ENCODE measurements at regions of chr1 and their contacts with region 1.

Region 1: DNA sequence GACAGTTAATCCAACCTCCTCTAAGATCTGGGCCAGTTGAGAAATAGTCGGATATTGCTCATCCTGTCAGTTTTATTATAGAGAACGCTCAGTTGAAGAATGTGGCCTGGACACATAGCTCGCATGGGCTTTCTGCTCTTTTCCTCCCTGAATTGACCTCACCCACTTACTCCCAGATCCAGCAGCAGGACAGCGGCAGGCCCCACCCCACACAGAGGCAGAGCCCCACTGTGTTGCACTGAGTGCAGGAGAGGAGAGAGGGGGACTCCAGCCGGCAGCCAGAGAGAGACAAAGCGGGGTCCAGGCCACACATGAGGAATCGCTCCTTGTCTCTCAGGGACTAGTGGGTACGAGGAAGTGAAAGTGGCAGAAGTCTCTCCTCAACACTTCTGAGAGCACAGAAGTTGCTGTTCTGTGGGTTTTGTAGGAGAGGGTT is 78.6 kb downstream of the LAMC1 start:
- DNase-seq: peak; percentile 25 to 45
- H3K4me3 ChIP-seq: no peak overlapping the region
- H3K4me3 Mint-ChIP-seq: peak overlapping the region; percentile 7
- H3K27ac Mint-ChIP-seq: no peak overlapping the region
- H3K4me1 ChIP-seq: peaks cover 72% of the 10 kb centered on the region
- H3K4me1 Mint-ChIP-seq: peaks cover 18% of the 10 kb centered on the region
- H3K27me3 ChIP-seq: no peaks in the 10 kb centered on the region
- H3K27me3 Mint-ChIP-seq: no peaks in the 10 kb centered on the region
- CTCF ChIP-seq: no peak

Region 2: DNA sequence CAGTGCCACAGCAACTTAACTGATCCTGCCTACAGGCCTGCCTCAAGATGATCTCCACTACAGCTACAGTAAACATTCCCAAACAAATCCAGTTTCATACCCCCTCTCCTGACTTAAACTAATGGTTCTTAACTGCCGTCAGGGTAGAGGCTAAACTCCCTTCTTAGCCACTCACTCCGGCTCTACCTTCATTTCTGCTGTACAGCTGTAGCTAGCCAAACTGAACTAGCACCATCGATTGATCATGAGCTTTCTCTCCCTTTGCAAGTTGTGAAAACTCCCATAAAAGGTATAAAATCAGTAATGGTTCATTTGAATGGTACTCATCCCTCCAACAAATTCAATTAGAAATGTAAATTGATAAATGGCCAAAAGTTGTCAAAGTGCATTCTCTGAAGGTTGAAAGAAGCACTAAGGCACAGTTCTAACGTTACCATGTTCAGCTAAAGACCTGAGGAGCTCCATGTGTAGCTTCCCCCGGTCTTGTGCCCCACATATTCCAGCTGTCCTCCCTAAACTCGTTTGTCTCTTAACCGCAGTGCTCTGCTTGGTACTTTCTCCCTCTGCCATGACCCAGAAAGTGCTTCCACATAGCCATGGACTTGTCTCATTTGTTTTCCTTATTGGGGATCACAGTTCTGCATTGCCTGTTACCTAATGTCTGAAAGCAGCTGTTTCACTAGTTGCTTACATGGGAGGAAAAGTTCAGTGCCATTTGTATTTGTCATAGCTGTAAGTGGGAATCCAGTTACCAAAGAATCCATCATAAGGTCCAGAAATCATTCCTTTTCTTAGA is 212.9 kb before region 1 on chr1:
- CTCF ChIA-PET with region 1: no interaction called
- POLR2A ChIA-PET with region 1: no interaction called
- intact Hi-C with region 1: no loop called
- DNase-seq: no peak
- H3K4me3 ChIP-seq: no peak overlapping the region
- H3K4me3 Mint-ChIP-seq: no peak overlapping the region
- H3K27ac Mint-ChIP-seq: no peak overlapping the region
- H3K4me1 ChIP-seq: no peaks in the 10 kb centered on the region
- H3K4me1 Mint-ChIP-seq: no peaks in the 10 kb centered on the region
- H3K27me3 ChIP-seq: no peaks in the 10 kb centered on the region
- H3K27me3 Mint-ChIP-seq: no peaks in the 10 kb centered on the region
- CTCF ChIP-seq: no peak

Region 3: GRCh38 chr1:182962554-182963115 is 139.2 kb before region 1 on chr1:
- CTCF ChIA-PET with region 1: no interaction called
- POLR2A ChIA-PET with region 1: no interaction called
- intact Hi-C with region 1: loop called (anchors 1 kb)
- DNase-seq: peak; percentile 78 to 81
- H3K4me3 ChIP-seq: peak overlapping the region; percentile 21; the same call in 1 of the 2 replicates
- H3K4me3 Mint-ChIP-seq: peak overlapping the region; percentile 55
- H3K27ac Mint-ChIP-seq: peak overlapping the region; percentile 58
- H3K4me1 ChIP-seq: peaks cover 36% of the 10 kb centered on the region
- H3K4me1 Mint-ChIP-seq: peaks cover 14% of the 10 kb centered on the region
- H3K27me3 ChIP-seq: no peaks in the 10 kb centered on the region
- H3K27me3 Mint-ChIP-seq: no peaks in the 10 kb centered on the region
- CTCF ChIP-seq: peak; percentile 90 to 93

Region 4: DNA sequence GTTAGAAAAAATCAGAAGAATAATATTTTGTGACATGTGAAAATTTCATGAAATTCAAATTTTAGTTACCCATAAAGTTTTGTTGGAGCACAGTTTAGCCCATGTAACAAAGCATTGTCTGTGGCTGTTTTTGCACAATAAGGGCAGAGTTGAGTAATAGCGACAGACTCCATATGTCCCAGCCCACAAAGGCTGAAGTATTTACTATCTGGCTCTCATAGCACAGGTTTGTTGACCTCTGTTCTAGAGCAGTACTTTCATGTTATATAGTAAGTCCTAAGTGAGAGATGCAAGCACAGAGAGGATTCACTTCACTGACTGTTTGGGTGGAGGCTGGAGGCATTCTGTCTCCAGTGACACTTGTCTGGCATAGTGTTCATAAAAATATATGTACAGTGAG is 71.8 kb before region 1 on chr1:
- CTCF ChIA-PET with region 1: no interaction called
- POLR2A ChIA-PET with region 1: no interaction called
- intact Hi-C with region 1: loop called (anchors 1 kb)
- DNase-seq: peak; percentile 42 to 63
- H3K4me3 ChIP-seq: no peak overlapping the region
- H3K4me3 Mint-ChIP-seq: peak overlapping the region; percentile 32
- H3K27ac Mint-ChIP-seq: peak overlapping the region; percentile 63
- H3K4me1 ChIP-seq: peaks cover 64% of the 10 kb centered on the region
- H3K4me1 Mint-ChIP-seq: peaks cover 43% of the 10 kb centered on the region
- H3K27me3 ChIP-seq: no peaks in the 10 kb centered on the region
- H3K27me3 Mint-ChIP-seq: no peaks in the 10 kb centered on the region
- CTCF ChIP-seq: no peak

Region 5: DNA sequence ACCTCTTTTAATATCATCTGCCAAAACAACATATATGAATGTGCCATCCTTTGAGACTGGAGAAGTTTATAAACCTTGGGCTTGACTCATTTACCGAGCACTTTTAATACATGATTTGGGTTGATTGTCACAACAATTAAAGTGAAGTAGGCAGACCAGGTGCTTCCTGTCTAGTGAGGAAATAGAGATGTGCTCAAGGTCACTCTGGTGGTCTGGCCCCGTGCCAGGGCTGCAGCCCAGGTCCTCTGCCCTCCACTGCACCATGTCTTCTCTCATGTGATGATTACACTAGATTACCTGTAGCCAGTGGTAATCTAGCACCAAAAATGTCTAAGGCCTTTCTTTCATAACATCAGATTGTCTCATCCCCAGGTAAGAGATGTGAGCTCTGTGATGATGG is 22.4 kb after region 1 on chr1:
- CTCF ChIA-PET with region 1: no interaction called
- POLR2A ChIA-PET with region 1: no interaction called
- intact Hi-C with region 1: loop called (anchors 2 kb)
- DNase-seq: no peak
- H3K4me3 ChIP-seq: no peak overlapping the region
- H3K4me3 Mint-ChIP-seq: no peak overlapping the region
- H3K27ac Mint-ChIP-seq: no peak overlapping the region
- H3K4me1 ChIP-seq: peaks cover 20% of the 10 kb centered on the region
- H3K4me1 Mint-ChIP-seq: peaks cover 19% of the 10 kb centered on the region
- H3K27me3 ChIP-seq: no peaks in the 10 kb centered on the region
- H3K27me3 Mint-ChIP-seq: no peaks in the 10 kb centered on the region
- CTCF ChIP-seq: no peak

Region 6: GRCh38 chr1:183139281-183139942 is 37.6 kb after region 1 on chr1:
- CTCF ChIA-PET with region 1: no interaction called
- POLR2A ChIA-PET with region 1: no interaction called
- intact Hi-C with region 1: loop called (anchors 1 kb)
- DNase-seq: peak in 1 of 2 experiments; percentile 30
- H3K4me3 ChIP-seq: no peak overlapping the region
- H3K4me3 Mint-ChIP-seq: peak overlapping the region; percentile 47
- H3K27ac Mint-ChIP-seq: peak overlapping the region; percentile 82
- H3K4me1 ChIP-seq: peaks cover 28% of the 10 kb centered on the region; the same call in 1 of the 2 replicates
- H3K4me1 Mint-ChIP-seq: peaks cover 11% of the 10 kb centered on the region
- H3K27me3 ChIP-seq: no peaks in the 10 kb centered on the region
- H3K27me3 Mint-ChIP-seq: no peaks in the 10 kb centered on the region
- CTCF ChIP-seq: no peak

Region 7: DNA sequence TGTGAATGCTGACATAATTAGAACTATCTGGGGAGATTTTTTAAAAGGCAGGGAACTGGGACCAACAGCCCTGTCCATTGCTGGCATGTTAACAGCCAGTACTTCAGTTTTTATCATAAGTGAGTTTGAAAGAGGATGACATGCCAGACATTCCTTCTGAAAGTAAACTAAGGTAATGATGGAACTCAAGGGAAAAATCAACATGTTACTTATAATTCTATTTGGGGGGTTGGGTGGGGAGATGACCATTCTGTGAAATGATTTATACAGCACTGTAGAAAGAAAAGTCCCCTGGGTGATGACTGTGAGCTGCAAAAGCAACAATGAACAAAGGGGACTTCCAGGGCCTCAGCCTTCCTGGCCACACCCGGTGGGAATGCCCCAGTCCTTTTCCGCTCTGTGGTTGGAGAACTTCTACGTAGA is 78.8 kb after region 1 on chr1:
- CTCF ChIA-PET with region 1: no interaction called
- POLR2A ChIA-PET with region 1: no interaction called
- intact Hi-C with region 1: loop called (anchors 1 kb)
- DNase-seq: peak; percentile 53 to 76
- H3K4me3 ChIP-seq: no peak overlapping the region
- H3K4me3 Mint-ChIP-seq: peak overlapping the region; percentile 14
- H3K27ac Mint-ChIP-seq: peak overlapping the region; percentile 30
- H3K4me1 ChIP-seq: peaks cover 56% of the 10 kb centered on the region
- H3K4me1 Mint-ChIP-seq: peaks cover 36% of the 10 kb centered on the region
- H3K27me3 ChIP-seq: no peaks in the 10 kb centered on the region
- H3K27me3 Mint-ChIP-seq: no peaks in the 10 kb centered on the region
- CTCF ChIP-seq: no peak

Region 8: DNA sequence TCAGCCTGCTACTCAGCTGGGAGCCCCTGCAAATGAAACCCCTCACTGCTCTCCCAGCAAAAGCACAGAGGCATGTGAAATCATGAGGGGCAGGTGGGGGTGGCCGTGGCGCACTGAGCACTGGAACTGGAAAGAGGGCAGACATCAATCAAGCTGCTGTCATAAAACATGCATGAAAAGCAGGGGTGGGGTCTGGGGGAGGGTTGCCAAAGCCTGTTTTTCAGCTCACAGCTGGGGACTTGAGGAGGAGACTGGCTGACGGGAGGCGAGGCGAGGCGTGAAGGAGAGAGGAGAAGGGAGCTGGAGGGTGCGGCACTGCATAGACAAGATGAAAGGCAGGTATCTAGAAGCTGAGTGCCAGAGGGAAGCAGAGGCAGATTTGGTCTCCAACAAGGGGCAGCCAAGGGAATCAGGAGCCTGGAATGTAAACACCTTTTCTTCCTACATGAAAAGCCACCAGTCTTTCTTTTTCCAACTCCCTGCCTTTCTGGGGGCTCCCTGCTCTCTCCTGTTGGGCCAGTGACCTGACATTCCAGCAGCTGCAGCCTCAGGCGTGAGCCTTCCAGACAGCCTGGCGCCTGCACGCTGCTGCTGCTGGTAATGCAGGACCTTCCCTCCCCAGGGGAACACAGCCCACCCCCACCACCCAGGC is 229.4 kb after region 1 on chr1:
- CTCF ChIA-PET with region 1: no interaction called
- POLR2A ChIA-PET with region 1: no interaction called
- intact Hi-C with region 1: no loop called
- DNase-seq: peak; percentile 47 to 62
- H3K4me3 ChIP-seq: no peak overlapping the region
- H3K4me3 Mint-ChIP-seq: peak overlapping the region; percentile 27
- H3K27ac Mint-ChIP-seq: no peak overlapping the region
- H3K4me1 ChIP-seq: peaks cover 16% of the 10 kb centered on the region
- H3K4me1 Mint-ChIP-seq: peaks cover 16% of the 10 kb centered on the region
- H3K27me3 ChIP-seq: no peaks in the 10 kb centered on the region
- H3K27me3 Mint-ChIP-seq: no peaks in the 10 kb centered on the region
- CTCF ChIP-seq: no peak

Region 9: GRCh38 chr1:183580281-183580682 is 478.4 kb after region 1 on chr1:
- CTCF ChIA-PET with region 1: no interaction called
- POLR2A ChIA-PET with region 1: no interaction called
- intact Hi-C with region 1: no loop called
- DNase-seq: peak; percentile 30 to 51
- H3K4me3 ChIP-seq: no peak overlapping the region
- H3K4me3 Mint-ChIP-seq: no peak overlapping the region
- H3K27ac Mint-ChIP-seq: no peak overlapping the region
- H3K4me1 ChIP-seq: peaks cover 9% of the 10 kb centered on the region
- H3K4me1 Mint-ChIP-seq: peaks cover 17% of the 10 kb centered on the region
- H3K27me3 ChIP-seq: no peaks in the 10 kb centered on the region
- H3K27me3 Mint-ChIP-seq: no peaks in the 10 kb centered on the region
- CTCF ChIP-seq: peak; percentile 18 to 22